ENCODE measurements at regions of chr1 and their contacts with region 1.

Region 1: DNA sequence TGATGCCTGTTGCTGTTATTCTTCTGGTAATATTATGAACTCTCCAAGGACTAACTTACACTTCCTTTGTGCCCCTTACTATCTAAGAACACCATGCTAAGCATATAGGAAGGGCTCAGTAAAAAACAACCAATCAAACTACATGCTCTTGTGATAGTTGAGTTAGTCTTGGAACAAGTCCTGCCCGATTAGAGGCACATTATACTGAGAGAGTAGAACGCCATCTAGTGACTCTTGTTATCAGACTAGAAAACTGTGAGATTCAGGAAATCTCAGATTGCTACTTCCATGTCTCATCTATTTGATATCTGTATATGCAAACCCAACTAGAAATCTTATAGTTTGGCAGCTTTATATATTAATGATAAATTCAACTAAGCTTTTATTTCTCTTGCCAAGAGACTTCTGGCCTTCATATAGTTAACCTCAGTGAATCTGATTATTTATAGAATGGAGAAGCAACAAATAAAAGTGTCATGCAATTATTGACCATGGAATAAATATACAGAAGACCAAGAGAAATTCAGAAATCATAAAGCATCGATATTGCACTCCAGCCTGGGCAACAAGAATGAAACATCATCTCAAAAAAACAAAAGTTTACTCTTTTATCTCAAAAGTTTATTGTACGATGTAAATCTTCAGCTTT is 7.8 kb upstream of the SRRM1 start:
- DNase-seq: no peak
- ATAC-seq: peak; percentile 77

Region 2: DNA sequence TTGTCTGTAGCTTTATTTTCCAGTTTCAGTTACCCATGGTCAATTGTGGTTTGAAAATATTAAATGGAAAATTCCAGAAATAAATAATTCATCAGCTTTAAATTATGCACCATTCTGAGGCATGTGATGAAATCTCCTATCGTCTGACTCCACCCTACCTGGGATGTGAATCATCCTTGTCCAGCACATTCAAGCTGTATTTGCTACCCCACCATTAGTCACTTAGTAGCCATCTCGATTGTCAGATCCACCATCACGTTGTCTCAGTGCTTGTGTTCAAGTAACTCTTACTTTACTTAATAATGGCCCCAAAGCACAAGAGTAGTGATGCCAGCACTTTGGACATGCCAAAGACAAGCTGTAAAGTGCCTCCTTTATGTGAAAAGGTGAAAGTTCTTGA is 225.8 kb before region 1 on chr1:
- intact Hi-C with region 1: no loop called
- DNase-seq: no peak
- ATAC-seq: no peak

Region 3: GRCh38 chr1:24541711-24542346 is 93.5 kb before region 1 on chr1:
- intact Hi-C with region 1: loop called (anchors 2 kb)
- DNase-seq: peak; percentile 51
- ATAC-seq: peak; percentile 41